AG04449 (cell line): ENCODE measurements at regions of chr3 and their contacts with region 1.

Region 1: DNA sequence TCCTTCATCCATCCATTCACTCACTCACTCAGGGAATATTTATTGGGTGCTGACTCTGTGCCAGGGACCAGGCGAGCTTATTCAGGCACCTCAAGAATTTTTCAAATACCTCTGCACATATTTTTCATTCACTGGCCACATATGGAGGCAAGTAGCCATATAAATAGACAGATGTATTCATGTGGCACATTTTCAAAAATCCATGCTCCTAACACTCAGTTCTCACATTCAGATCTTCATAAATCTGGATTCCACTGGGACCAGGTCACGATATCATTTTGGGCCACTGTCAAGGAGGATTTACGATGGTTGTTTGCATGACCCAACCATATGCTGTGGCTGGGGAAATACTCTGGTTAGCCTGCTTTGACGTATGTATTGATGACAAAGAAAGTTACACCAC is 241.8 kb upstream of the LRTM1 start:
- DNase-seq: peak; percentile 100
- H3K4me3 ChIP-seq: no peak overlapping the region
- CTCF ChIP-seq: no peak

Region 2: DNA sequence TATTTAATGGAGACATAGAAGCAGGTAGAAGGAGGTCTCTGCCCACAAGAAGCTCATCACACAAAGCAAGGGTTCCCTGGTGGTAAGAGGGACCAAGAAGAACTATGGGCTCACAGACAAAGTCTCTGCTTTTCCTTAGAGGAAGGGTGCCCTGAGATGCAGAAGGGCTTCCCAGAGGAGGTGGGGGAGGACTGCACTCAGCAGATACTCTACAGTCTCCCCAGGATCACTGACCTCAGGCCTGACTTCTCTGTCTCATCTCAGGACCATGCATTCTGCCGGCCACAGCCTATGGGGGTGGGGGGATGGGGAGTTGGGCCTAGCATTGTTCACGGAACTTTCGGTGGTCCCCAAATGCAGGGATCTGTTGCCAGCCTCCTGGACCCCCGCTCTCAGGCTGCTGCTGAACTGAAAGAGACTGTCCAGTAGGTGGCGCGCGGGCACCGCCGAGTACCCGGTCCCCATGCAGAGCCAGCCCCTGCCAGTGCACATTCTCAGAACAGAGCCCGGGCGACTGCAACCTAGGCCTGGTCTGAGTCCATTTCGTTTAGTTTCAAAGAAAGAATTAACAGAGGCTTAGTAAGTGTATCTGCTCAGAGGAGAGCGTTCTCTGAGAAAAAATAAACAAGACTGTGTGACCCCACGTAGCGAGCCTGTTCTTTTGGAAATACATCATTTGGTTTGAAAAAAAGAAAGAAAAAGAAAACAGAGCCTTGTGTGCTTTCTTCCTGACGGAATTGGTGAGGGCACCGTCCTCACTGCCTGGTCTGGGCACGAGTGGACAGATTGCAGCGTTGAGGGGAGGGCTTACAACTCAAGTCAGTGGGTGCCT is 315.8 kb before region 1 on chr3:
- CTCF ChIA-PET with region 1: interaction called, 26 read pairs
- POLR2A ChIA-PET with region 1: interaction called, 5 read pairs
- DNase-seq: no peak
- H3K4me3 ChIP-seq: no peak overlapping the region
- CTCF ChIP-seq: peak; percentile 94

Region 3: GRCh38 chr3:54954022-54954421 is 215.6 kb before region 1 on chr3:
- CTCF ChIA-PET with region 1: interaction called, 4 read pairs
- POLR2A ChIA-PET with region 1: interaction called, 10 read pairs
- DNase-seq: peak; percentile 77
- H3K4me3 ChIP-seq: no peak overlapping the region
- CTCF ChIP-seq: no peak

Region 4: GRCh38 chr3:55042591-55042990 is 127.0 kb before region 1 on chr3:
- CTCF ChIA-PET with region 1: no interaction called
- POLR2A ChIA-PET with region 1: no interaction called
- DNase-seq: no peak
- H3K4me3 ChIP-seq: no peak overlapping the region
- CTCF ChIP-seq: no peak

Region 5: DNA sequence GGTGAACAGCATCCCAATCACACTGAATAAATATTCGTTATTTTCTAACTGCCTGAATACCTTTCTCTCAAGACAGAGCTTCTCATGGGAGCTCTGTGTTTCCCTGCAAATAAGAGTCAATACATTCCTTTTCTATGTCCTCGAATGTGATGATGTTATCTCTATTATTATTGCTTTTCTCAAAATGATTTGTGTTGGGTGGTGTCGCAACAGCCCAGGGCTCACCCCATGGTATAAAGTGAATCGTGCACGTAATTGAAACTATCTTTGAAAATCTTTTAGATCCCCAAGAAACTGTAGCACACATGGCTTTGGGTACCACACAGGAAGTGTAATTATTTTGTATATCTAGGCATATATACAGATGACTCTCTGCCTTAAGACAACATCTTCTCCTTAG is 51.2 kb before region 1 on chr3:
- CTCF ChIA-PET with region 1: no interaction called
- POLR2A ChIA-PET with region 1: no interaction called
- DNase-seq: no peak
- H3K4me3 ChIP-seq: no peak overlapping the region
- CTCF ChIP-seq: no peak

Region 6: DNA sequence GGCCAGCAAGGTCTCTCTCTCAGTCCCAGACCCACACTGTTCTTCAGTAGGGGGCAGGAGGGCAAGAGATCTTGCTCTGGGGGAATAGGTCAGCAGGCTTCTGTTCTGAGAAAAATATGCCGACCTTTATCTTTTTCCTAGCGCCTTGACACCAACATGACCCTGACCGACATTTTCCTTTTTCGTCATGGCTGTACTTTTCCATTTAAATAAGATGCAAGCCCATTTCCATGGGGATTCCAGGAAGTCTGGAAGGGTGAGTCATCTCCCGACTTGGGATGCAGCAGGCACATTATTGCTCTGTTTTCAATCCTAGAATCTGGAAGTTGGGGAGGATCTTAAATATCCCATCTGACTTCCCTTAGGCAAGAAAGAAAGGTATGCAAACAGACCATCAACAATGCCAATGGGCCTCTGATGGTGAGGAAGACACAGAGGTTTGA is 19.8 kb after region 1 on chr3:
- CTCF ChIA-PET with region 1: interaction called, 3 read pairs
- POLR2A ChIA-PET with region 1: interaction called, 39 read pairs
- DNase-seq: peak; percentile 76
- H3K4me3 ChIP-seq: no peak overlapping the region
- CTCF ChIP-seq: no peak

Region 7: GRCh38 chr3:55244247-55244646 is 74.6 kb after region 1 on chr3:
- CTCF ChIA-PET with region 1: no interaction called
- POLR2A ChIA-PET with region 1: no interaction called
- DNase-seq: no peak
- H3K4me3 ChIP-seq: no peak overlapping the region
- CTCF ChIP-seq: no peak

Region 8: GRCh38 chr3:55330355-55330754 is 160.7 kb after region 1 on chr3:
- CTCF ChIA-PET with region 1: no interaction called
- POLR2A ChIA-PET with region 1: interaction called, 15 read pairs
- DNase-seq: peak; percentile 94
- H3K4me3 ChIP-seq: no peak overlapping the region
- CTCF ChIP-seq: no peak

Region 9: GRCh38 chr3:55461896-55462295 is 292.3 kb after region 1 on chr3:
- CTCF ChIA-PET with region 1: no interaction called
- POLR2A ChIA-PET with region 1: interaction called, 11 read pairs
- DNase-seq: no peak
- H3K4me3 ChIP-seq: no peak overlapping the region
- CTCF ChIP-seq: no peak

Region 10: DNA sequence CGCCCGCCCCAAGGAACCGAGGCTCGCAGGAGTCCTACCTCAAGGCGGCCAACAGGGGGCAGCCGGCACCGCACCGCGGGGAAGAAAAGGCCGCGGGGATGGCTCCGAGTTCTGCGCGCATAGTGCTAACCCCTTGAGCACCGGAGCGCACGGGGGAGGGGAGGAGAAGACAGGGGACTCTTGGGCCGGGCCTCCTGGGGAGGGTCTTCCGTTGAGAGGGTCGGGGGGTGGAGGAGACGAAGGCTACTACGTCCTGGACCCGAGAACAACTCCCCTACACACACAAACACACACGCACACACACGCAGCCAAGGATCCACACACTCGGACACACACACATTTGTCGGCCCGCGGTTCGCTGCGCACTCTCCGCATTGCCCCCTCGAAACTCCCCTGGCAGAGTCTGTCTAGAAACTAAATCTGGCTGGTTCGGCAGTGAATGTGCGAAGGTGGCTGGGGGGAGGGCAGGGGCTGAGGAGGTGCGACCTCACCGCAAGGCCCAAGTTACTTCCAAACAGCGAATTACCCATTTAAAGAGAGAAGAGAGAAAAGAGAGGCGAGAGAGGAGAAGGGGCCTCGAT is 315.7 kb after region 1 on chr3:
- CTCF ChIA-PET with region 1: interaction called, 6 read pairs
- POLR2A ChIA-PET with region 1: interaction called, 19 read pairs
- DNase-seq: no peak
- H3K4me3 ChIP-seq: peak overlapping the region; percentile 98
- CTCF ChIP-seq: peak; percentile 80